Heart right ventricle (tissue), 16 donors: ENCODE measurements at regions of chr12 and their contacts with region 1.

Region 1: GRCh38 chr12:52865090-52865944 is 16.5 kb upstream of the KRT78 start:
- DNase-seq: peak; percentile 50 to 62
- ATAC-seq: peak in 7 of 8 donors; percentile 50 to 76 (median 60)
- H3K4me3 ChIP-seq: no peak overlapping the region
- H3K27ac ChIP-seq: no peak overlapping the region
- H3K4me1 ChIP-seq: peaks cover 0 to 6% (median 0%) of the 10 kb centered on the region in 9 donors
- H3K27me3 ChIP-seq: no peaks in the 10 kb centered on the region
- CTCF ChIP-seq: peak; percentile 47 to 77 (median 75)

Region 2: GRCh38 chr12:52667511-52667910 is 197.8 kb before region 1 on chr12:
- intact Hi-C with region 1: loop called in 5 of 10 experiments (anchors 5 to 10 kb)
- DNase-seq: no peak
- ATAC-seq: no peak
- H3K4me3 ChIP-seq: no peak overlapping the region
- H3K27ac ChIP-seq: no peak overlapping the region
- H3K4me1 ChIP-seq: peaks cover 0 to under 1% (median 0%) of the 10 kb centered on the region in 9 donors
- H3K27me3 ChIP-seq: peaks cover 0 to 30% (median 16%) of the 10 kb centered on the region in 7 donors
- CTCF ChIP-seq: peak in 7 of 9 donors; percentile 19 to 39 (median 28)

Region 3: GRCh38 chr12:53267999-53268647 is 402.8 kb after region 1 on chr12 and contains the start of gene ESPL1:
- intact Hi-C with region 1: no loop called
- DNase-seq: peak; percentile 70 to 75
- ATAC-seq: peak; percentile 86 to 97 (median 94)
- H3K4me3 ChIP-seq: peak within 1 kb of the TSS; percentile 54 to 73 (median 62)
- H3K27ac ChIP-seq: peak within 1 kb of the TSS in 7 of 10 donors; percentile 6 to 64 (median 37)
- H3K4me1 ChIP-seq: peaks cover 0 to 25% (median 5%) of the 10 kb centered on the region in 9 donors
- H3K27me3 ChIP-seq: no peaks in the 10 kb centered on the region
- CTCF ChIP-seq: peak in 7 of 9 donors; percentile 6 to 63 (median 34)
- total RNA-seq, gene ESPL1: 0.04 to 3.1 (median 0.36) TPM